ENCODE measurements at regions of chr20 and their contacts with region 1.

Region 1: DNA sequence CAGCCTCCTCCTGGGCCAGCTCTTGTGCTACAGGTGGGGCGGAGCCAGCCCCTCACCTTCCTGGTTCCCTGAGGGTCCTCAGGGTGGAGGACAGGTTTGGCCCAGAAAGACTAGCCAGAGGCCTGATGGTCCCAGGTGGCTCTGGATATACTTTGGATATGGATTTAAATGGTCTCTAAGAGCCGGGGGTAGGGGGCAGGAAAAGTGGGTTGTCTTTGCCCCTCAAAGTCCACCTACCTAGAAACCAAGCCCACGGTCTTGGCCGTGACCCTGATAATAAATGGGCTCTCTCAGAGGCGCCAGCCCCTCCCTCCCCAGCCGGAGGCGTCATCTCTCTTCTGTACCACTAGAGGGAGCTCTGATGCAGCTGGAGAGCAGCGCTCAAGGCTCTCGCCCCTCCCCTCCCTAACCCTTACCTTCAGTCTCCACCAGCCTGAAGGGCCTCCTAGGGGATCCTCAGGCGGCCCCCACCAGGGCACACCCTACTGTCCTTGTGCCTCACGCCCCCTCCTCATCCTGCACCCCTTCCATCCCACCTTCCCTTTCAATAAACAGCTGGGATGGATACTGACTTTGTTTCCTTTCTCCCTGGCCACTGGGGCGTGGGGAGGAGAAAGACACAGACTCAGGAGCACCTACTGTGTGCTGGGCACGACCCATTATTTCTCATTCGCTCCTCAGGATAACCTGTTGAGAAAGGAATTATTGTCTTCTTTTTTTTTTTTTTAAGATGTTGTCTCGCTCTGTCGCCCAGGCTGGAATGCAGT is 7.6 kb downstream of the NRSN2 start:
- DNase-seq: peak; percentile 83

Region 2: DNA sequence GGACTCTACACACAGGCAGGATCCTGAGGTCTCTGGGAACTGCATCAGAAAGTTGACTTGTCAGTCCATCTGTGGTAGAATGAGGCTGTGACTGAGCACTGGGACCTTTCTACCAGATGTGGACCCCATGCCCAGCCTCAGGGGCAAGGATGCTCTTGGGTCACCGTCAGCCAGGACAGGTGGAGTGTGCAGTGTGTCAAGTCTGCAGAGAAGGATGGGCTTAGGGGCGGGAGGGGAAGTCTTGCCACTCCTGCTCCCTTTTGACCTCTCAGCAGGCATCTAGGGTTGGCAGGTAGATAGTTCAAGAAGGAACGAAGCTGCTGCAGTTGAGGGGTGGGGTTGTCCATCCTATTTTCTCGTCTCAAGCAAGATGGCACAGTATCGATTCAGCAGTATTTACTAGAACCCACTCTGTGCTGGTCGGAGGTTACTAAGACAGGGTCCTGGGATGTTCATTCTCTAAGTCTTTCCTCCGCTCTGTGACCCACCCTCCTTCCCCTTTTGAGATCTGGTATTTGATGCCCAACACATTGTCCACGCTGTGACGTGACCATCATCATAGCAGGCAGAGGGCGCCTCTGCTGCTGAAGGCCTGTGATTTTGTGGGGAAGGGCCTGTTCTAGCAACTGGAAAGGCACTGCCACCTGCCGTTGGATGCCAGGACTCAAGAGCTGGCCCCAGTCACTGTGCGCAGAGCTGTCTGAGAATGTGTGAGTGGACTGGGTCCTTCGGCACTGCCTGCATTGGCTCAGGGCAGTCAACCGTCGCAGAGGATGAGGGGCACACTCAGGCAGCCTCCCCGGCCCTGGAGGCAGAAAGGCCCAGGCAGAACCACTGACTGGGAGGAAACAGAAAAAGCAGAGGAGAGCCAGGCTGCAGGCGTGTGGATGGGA is 76.8 kb after region 1 on chr20:
- intact Hi-C with region 1: loop called (anchors 5 kb)
- DNase-seq: no peak

Region 3: GRCh38 chr20:462199-462991 is 107.9 kb after region 1 on chr20 and contains the start of gene TBC1D20:
- intact Hi-C with region 1: loop called (anchors 5 kb)
- DNase-seq: peak; percentile 92
- total RNA-seq, gene TBC1D20: 26.5 TPM

Region 4: DNA sequence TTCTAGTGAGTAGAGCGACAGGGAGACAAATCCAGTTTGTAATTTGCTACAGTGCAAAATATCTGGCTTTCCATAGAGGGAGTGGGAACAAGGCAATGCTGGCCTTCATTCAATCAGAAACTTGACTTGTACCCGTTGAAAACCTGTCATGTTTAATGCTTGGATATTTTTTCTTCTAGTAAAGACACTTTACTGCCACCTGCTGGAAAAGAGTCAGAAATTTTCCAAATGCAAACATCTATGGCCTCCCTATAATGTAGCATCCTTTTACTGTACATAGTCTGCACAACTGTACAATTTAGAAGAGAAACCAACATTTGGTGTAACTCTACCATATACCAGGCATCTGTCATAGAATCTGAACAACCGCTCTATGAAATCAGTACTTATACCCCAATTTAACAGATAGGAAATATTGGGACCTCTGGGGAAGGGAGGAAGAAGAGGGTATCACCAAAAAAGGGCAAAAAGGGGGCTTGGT is 124.5 kb after region 1 on chr20:
- intact Hi-C with region 1: loop called (anchors 2 kb)
- DNase-seq: no peak

Region 5: GRCh38 chr20:496126-496696 is 141.7 kb after region 1 on chr20:
- intact Hi-C with region 1: no loop called
- DNase-seq: no peak

Region 6: GRCh38 chr20:645318-646106 is 291.0 kb after region 1 on chr20:
- intact Hi-C with region 1: loop called (anchors 5 kb)
- DNase-seq: peak; percentile 89

Region 7: DNA sequence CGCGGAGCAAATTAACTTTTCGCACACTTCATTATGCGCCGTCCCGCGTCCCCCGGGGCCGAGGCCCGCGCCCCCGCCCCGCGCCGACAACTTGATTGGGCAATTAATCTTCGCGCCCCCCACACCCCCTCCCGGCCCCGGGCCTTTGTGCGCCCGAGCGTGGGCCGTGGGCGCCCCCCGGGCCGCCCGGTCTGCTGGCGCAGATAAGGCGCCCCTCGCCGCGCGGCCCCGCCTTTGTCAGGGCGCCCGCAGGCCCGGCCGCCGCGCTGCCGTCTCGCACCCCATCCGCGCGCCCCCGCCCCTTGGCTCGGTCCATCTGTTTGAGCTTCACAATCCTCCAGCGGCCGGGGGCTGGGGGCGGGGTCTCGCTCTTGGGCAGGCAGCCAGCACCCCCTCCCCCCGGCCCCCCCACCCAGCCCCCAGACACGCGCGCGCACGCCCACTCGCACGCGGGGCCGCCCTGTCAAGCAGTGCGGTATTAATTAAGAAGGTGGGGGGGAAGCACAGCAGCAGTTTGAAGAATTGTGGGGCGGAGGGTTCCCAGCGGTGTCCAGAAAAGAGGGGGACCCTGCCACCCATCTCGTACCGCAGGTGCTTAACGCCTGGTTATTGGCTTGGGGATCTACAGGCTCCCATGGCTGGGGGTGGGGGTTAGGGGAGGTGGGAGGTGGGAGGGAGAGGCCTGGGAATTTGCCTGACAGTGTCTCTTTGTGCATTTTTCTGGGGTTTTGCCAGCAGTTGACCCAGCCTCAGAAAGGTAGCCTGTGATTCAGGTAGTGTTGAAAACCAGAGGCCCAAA is 355.7 kb after region 1 on chr20:
- intact Hi-C with region 1: no loop called
- DNase-seq: peak; percentile 24

Region 8: GRCh38 chr20:733861-734260 is 379.4 kb after region 1 on chr20:
- intact Hi-C with region 1: loop called (anchors 5 kb)
- DNase-seq: no peak

Measured in cardiac septum (tissue), 1 donor.